Activated T-helper 1 cell treated with anti-CD3 and anti-CD28 coated beads, Interleukin-12 subunit alpha, Interleukin-12 subunit beta, Interleukin-2, Interleukin-4 antibody, amounts not matched to agents 30 ng/mL and 10 ng/mL and 1 ng/mL, durations not matched to agents 14 hours and 24 hours and 36 hours (primary cell): ENCODE measurements at regions of chr13 and their contacts with region 1.

Region 1: DNA sequence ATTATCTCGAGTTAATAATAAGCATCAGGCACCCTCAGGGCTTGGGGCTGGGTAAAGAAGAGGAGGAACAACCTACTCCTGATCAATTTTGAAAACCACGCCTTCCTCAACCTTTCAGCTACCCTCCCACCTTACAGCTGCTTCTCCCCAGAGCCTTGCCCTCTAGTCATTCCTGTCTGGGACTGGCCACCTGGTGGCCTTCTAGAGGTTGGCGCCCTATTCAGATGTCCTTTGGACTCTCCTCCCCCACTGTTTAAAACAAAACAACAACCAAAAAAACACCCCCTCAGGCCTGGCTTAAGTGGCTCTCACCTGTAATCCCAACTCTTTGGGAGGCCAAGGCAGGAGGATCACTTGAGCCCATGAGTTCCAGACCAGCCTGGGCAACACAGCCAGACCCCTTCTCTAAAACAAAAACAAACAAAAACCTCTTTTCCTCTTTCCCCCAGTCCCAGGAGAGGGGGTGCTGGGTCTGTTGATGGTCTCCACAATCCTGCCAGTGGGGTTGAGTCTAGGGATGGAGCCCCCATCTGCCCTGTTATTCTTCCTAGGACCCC is 62.3 kb downstream of the CCDC70 start:
- DNase-seq: no peak
- H3K4me3 Mint-ChIP-seq: no peak overlapping the region
- H3K27ac Mint-ChIP-seq: no peak overlapping the region
- H3K4me1 Mint-ChIP-seq: peaks cover 22% of the 10 kb centered on the region
- H3K27me3 Mint-ChIP-seq: peaks cover 4% of the 10 kb centered on the region

Region 2: GRCh38 chr13:51797664-51798488 is 126.2 kb before region 1 on chr13:
- intact Hi-C with region 1: no loop called
- DNase-seq: peak; percentile 52
- H3K4me3 Mint-ChIP-seq: no peak overlapping the region
- H3K27ac Mint-ChIP-seq: no peak overlapping the region
- H3K4me1 Mint-ChIP-seq: peaks cover 52% of the 10 kb centered on the region
- H3K27me3 Mint-ChIP-seq: no peaks in the 10 kb centered on the region

Region 3: GRCh38 chr13:51895906-51896888 is 27.9 kb before region 1 on chr13:
- intact Hi-C with region 1: loop called (anchors 1 kb)
- DNase-seq: peak; percentile 14
- H3K4me3 Mint-ChIP-seq: no peak overlapping the region
- H3K27ac Mint-ChIP-seq: no peak overlapping the region
- H3K4me1 Mint-ChIP-seq: peaks cover 4% of the 10 kb centered on the region
- H3K27me3 Mint-ChIP-seq: peaks cover 16% of the 10 kb centered on the region

Region 4: GRCh38 chr13:51942189-51942588 is 18.1 kb after region 1 on chr13:
- intact Hi-C with region 1: no loop called
- DNase-seq: no peak
- H3K4me3 Mint-ChIP-seq: no peak overlapping the region
- H3K27ac Mint-ChIP-seq: no peak overlapping the region
- H3K4me1 Mint-ChIP-seq: peaks cover 28% of the 10 kb centered on the region
- H3K27me3 Mint-ChIP-seq: peaks cover 20% of the 10 kb centered on the region